MCF 10A (cell line): ENCODE measurements at regions of chr12 and their contacts with region 1.

Region 1: GRCh38 chr12:3998968-3999826 is 126.0 kb upstream of the PARP11 start:
- DNase-seq: peak; percentile 78
- H3K4me3 Mint-ChIP-seq: no peak overlapping the region
- H3K27ac Mint-ChIP-seq: peak overlapping the region; percentile 86
- H3K4me1 Mint-ChIP-seq: peaks cover 12% of the 10 kb centered on the region
- H3K27me3 Mint-ChIP-seq: peaks cover 8% of the 10 kb centered on the region
- CTCF ChIP-seq: no peak

Region 2: DNA sequence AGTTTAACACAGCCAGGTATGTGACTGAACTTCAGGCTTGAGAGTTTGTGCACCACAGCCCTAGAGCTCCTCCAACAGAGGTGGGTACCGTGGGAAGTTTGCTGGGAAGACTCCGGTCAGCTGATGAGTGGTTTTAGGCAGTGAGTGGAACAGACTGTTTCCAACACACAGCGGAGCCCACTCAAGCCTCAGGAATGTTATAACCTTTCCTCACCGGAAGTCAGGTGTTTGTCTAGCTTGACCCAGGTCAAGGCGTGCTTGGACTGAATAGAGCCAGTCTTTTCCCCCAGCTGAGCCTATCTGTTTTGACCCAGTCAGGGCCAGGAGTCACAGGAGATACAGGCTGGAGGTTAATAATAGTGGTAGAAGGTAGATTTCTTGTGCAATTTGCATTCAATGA is 12.4 kb after region 1 on chr12:
- CTCF ChIA-PET with region 1: interaction called, 34 read pairs
- POLR2A ChIA-PET with region 1: no interaction called
- intact Hi-C with region 1: no loop called
- DNase-seq: peak; percentile 83
- H3K4me3 Mint-ChIP-seq: no peak overlapping the region
- H3K27ac Mint-ChIP-seq: peak overlapping the region; percentile 51
- H3K4me1 Mint-ChIP-seq: peaks cover 16% of the 10 kb centered on the region
- H3K27me3 Mint-ChIP-seq: no peaks in the 10 kb centered on the region
- CTCF ChIP-seq: no peak